Mammary epithelial cell (primary cell): ENCODE measurements at regions of chr14 and their contacts with region 1.

Region 1: DNA sequence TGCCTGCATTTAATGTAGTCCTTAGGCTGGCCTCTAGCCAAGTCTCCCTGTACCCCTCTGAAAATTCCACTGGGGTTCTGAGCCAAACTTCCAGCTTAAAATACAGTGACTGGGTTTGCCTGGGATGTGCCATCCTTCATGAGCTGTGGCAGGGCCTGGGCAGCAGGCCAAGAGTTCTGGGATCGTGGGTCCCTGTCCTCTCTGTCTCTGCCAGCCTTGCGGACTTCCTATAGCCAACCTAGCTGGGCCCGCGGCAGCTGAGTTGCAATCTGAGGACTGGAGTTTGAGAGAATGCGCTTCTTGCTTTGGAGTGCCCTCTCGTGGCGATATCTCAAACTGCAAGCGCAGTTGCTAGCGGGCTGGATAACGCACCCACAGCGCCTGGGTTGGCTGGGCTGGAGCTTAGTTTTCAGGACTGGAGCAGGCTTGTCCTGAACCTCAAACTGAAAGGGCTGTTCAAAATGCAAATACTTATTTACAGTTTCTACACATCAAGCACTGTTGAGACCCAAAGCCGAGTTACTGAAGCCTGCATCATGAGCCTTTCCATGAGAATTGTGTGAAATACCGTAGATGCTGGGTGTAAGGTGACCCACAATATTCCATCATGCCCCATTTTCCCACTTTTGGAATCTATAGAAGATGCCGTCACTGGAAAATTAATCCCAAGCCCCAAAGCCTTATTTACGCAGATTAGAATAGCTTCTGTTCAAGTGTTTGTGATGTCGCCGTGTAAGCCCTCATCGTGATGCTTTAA is 7.3 kb upstream of the IFI27L2 start:
- DNase-seq: peak; percentile 71
- H3K4me3 ChIP-seq: no peak overlapping the region
- H3K27ac ChIP-seq: no peak overlapping the region
- H3K4me1 ChIP-seq: no peaks in the 10 kb centered on the region
- H3K27me3 ChIP-seq: no peaks in the 10 kb centered on the region
- CTCF ChIP-seq: peak; percentile 97 to 98

Region 2: DNA sequence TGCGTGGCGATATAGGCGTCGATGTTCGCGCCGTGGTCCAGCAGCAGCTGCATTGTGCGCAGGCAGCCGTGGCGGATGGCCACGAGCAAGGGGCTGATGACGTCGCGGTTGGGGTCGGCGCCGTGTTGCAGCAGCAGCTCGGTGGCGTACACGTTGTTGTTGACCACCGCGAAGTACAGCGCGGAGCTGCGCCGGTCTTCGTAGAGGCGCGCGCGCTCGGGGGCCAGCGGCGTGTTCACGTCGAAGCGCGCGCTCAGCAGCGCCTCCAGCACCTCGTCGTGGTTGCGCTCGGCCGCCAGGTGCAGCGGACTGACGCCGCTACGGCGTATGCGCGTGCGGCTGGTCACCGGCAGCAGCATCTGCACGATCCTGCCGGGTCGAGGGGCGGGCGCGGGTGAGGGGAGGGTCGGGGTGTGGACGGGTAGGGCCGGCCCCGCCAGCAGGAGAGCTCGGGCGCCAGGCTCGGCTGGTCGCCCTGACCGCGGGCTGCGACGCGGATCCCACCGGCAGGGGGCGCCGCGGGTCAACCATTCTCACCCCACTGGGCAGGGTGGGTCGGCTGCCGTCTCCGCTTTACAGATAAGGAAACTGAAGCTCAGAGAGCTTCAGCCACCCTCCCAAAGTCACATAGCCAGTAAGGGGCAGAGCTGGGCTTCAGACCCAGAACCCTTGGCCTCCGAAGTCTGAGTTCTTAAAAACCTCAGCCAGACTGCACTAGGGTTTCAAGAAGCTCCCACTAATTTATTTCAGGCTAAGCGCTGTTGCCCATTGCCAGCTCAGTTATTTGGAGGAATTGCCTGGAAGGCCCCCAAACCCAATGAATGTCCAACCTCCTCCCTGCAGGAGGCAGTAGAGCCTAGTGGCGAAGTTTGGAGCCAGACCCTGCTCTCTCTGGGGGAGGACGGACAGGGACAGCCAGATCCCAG is 197.2 kb before region 1 on chr14:
- CTCF ChIA-PET with region 1: interaction called, 3 read pairs
- dilution Hi-C with region 1: no loop called
- in situ Hi-C with region 1: no loop called
- intact Hi-C with region 1: loop called (anchors 2 kb)
- DNase-seq: peak; percentile 71
- H3K4me3 ChIP-seq: peak overlapping the region in 1 of 3 experiments; percentile 16
- H3K27ac ChIP-seq: no peak overlapping the region
- H3K4me1 ChIP-seq: peaks cover 54% of the 10 kb centered on the region
- H3K27me3 ChIP-seq: no peaks in the 10 kb centered on the region
- CTCF ChIP-seq: peak; percentile 28 to 52

Region 3: DNA sequence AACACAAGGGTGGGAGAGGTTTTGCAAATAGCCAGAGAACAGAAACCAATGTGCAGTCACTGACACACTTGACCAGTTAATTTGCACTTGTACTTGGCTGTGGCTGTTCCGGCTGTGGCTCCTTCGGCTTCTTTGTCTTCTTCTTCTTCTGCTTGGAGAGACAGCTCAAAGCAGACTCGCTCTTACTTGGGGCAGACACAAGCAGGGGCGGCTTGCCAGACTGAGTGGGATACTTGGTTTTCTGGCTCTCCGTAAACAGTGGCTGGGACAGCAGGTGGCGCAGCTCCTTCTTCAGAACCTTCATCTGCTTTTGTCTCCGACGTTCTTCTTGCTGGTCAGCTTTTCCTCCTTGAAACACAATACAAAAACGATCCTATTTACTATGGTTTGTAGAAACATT is 85.6 kb before region 1 on chr14:
- CTCF ChIA-PET with region 1: interaction called, 3 read pairs
- dilution Hi-C with region 1: no loop called
- in situ Hi-C with region 1: no loop called
- intact Hi-C with region 1: loop called (anchors 1 kb)
- DNase-seq: peak; percentile 24
- H3K4me3 ChIP-seq: no peak overlapping the region
- H3K27ac ChIP-seq: no peak overlapping the region
- H3K4me1 ChIP-seq: no peaks in the 10 kb centered on the region
- H3K27me3 ChIP-seq: no peaks in the 10 kb centered on the region
- CTCF ChIP-seq: peak in 1 of 2 donors; percentile 33

Region 4: DNA sequence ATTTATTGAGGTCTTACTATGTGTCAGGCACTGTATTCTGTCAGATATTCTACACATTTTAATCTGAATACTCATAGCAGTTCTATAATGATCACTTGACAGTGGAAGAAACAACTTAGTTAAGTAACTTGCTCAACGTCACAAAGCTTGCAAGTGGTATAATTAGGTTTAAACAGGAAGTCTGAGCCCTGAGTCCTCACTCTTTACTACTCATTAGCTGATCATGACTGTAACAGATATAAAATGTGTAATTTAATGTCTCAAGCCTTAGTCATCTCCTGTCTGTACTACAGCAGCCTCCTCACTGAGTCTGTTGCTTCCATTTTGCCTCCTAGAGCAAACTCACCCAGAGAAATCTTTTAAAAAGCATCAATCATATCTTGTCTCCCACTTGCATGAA is 76.3 kb after region 1 on chr14:
- CTCF ChIA-PET with region 1: no interaction called
- dilution Hi-C with region 1: no loop called
- in situ Hi-C with region 1: no loop called
- intact Hi-C with region 1: no loop called
- DNase-seq: peak; percentile 84
- H3K4me3 ChIP-seq: no peak overlapping the region
- H3K27ac ChIP-seq: peak overlapping the region; percentile 53
- H3K4me1 ChIP-seq: peaks cover 9% of the 10 kb centered on the region
- H3K27me3 ChIP-seq: no peaks in the 10 kb centered on the region
- CTCF ChIP-seq: no peak

Region 5: DNA sequence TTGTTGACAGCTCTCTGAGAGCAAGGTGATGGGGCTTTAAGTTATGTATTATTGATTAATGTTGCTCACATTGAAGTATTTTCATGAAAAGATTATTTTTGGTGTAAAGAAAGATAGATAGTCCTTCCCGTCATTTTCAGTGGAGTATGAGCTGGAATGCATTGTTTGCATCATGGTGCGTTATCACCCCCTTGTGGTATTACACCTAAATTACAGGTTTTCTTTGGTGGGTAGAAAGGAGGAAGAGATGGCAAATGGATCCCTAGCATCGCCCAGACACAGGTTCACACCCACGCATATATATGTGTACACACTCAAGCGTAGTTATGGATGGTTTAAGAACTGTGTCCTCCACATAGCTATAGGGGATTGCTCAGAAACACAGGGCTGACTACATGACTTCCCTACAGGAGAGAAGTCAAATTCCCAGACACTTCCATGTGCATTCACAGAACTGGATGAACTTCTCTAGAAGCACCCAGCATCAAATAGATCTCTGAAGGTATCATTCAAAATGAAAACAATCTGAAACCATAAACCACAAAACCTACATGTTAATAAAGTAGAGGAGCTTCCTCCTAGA is 170.7 kb after region 1 on chr14:
- CTCF ChIA-PET with region 1: no interaction called
- dilution Hi-C with region 1: no loop called
- in situ Hi-C with region 1: loop called in 1 of 2 experiments (anchors 10 kb)
- intact Hi-C with region 1: loop called (anchors 2 kb)
- DNase-seq: peak; percentile 30
- H3K4me3 ChIP-seq: no peak overlapping the region
- H3K27ac ChIP-seq: no peak overlapping the region
- H3K4me1 ChIP-seq: peaks cover 6% of the 10 kb centered on the region
- H3K27me3 ChIP-seq: no peaks in the 10 kb centered on the region
- CTCF ChIP-seq: peak; percentile 42 to 47

Region 6: GRCh38 chr14:94412671-94413638 is 276.2 kb after region 1 on chr14:
- CTCF ChIA-PET with region 1: interaction called, 13 read pairs
- dilution Hi-C with region 1: no loop called
- in situ Hi-C with region 1: no loop called
- intact Hi-C with region 1: loop called (anchors 1 kb)
- DNase-seq: peak; percentile 51
- H3K4me3 ChIP-seq: no peak overlapping the region
- H3K27ac ChIP-seq: no peak overlapping the region
- H3K4me1 ChIP-seq: peaks cover 18% of the 10 kb centered on the region
- H3K27me3 ChIP-seq: no peaks in the 10 kb centered on the region
- CTCF ChIP-seq: peak; percentile 50 to 82